Calu3 (cell line): ENCODE measurements at regions of chr1 and their contacts with region 1.

Region 1: GRCh38 chr1:121519042-121519755 is 334.4 kb downstream of the SRGAP2C start:
- DNase-seq: peak; percentile 70
- H3K4me3 Mint-ChIP-seq: peak overlapping the region; percentile 86
- H3K27ac Mint-ChIP-seq: peak overlapping the region; percentile 76
- H3K4me1 Mint-ChIP-seq: peaks cover 24% of the 10 kb centered on the region
- H3K27me3 Mint-ChIP-seq: no peaks in the 10 kb centered on the region
- CTCF ChIP-seq: no peak

Region 2: GRCh38 chr1:121445679-121446078 is 73.5 kb before region 1 on chr1:
- CTCF ChIA-PET with region 1: no interaction called
- intact Hi-C with region 1: loop called (anchors 5 kb)
- DNase-seq: no peak
- H3K4me3 Mint-ChIP-seq: no peak overlapping the region
- H3K27ac Mint-ChIP-seq: no peak overlapping the region
- H3K4me1 Mint-ChIP-seq: no peaks in the 10 kb centered on the region
- H3K27me3 Mint-ChIP-seq: no peaks in the 10 kb centered on the region
- CTCF ChIP-seq: no peak

Region 3: DNA sequence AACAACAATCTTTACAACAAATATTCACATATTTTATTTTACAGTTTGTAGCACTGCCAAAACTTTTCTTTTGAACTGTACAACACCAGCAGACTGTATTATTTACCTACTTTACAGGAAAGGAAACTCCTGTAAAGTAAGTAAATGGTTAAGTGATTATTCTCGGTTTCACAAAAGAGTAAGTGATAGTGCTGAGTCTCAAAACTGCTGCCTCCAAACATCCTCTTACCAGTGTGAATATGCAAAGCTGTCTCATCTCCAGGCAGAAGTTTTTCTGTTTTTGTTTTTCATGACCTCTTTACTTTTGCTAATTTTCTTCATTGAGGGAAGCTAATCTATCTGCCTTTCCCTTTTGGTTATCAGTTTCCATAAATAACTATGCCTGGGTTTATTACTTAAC is 47.7 kb before region 1 on chr1:
- CTCF ChIA-PET with region 1: no interaction called
- intact Hi-C with region 1: loop called (anchors 5 kb)
- DNase-seq: no peak
- H3K4me3 Mint-ChIP-seq: no peak overlapping the region
- H3K27ac Mint-ChIP-seq: no peak overlapping the region
- H3K4me1 Mint-ChIP-seq: no peaks in the 10 kb centered on the region
- H3K27me3 Mint-ChIP-seq: no peaks in the 10 kb centered on the region
- CTCF ChIP-seq: no peak

Region 4: GRCh38 chr1:121558514-121558913 is 39.3 kb after region 1 on chr1:
- CTCF ChIA-PET with region 1: no interaction called
- intact Hi-C with region 1: loop called (anchors 5 kb)
- DNase-seq: no peak
- H3K4me3 Mint-ChIP-seq: no peak overlapping the region
- H3K27ac Mint-ChIP-seq: no peak overlapping the region
- H3K4me1 Mint-ChIP-seq: no peaks in the 10 kb centered on the region
- H3K27me3 Mint-ChIP-seq: no peaks in the 10 kb centered on the region
- CTCF ChIP-seq: no peak

Region 5: DNA sequence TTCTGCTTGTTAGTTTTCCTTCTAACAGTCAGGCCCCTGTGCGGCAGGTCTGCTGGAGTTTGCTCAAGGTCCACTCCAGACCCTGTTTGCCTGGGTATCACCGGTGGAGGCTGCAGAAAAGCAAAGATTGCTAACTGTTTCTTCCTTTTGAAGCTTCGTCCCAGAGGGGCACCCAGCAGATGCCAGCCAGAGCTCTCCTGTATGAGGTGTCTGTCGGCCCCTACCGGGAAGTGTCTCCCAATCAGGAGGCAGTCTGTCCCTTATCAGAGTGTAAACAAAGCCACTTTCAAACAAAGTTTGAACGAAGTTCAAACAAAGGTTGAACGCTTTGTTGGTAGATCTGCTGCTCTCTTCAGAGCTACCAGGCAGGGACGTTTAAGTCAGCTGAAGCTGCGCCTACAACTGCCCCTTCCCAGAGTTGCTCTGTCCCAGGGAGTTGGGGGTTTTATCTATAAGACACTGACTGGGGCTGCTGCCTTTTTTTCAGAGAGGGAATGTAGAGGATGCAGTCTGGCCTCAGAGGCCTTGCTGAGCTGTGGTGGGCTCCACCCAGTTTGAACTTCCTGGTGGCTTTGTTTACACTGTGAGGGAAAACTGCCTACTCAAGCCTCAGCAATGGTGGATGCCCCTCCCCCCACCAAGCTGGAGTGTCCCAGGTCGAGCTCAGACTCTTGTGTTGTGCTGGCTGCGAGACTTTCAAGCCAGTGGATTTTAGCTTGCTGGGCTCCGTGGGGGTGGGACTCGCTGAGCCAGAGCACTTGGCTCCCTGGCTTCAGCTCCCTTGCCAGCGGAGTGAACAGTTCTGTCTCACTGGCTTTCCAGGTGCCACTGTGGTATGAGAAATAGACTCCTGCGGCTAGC is 67.4 kb after region 1 on chr1:
- CTCF ChIA-PET with region 1: no interaction called
- intact Hi-C with region 1: loop called (anchors 2 kb)
- DNase-seq: peak; percentile 49
- H3K4me3 Mint-ChIP-seq: peak overlapping the region; percentile 28
- H3K27ac Mint-ChIP-seq: peak overlapping the region; percentile 17
- H3K4me1 Mint-ChIP-seq: peaks cover 8% of the 10 kb centered on the region
- H3K27me3 Mint-ChIP-seq: no peaks in the 10 kb centered on the region
- CTCF ChIP-seq: no peak